ENCODE measurements at regions of chr3 and their contacts with region 1.

Region 1: GRCh38 chr3:10389995-10390394 is 69.1 kb upstream of the SEC13 start:
- DNase-seq: peak; percentile 94
- H3K4me3 ChIP-seq: peak overlapping the region; percentile 41
- H3K27ac ChIP-seq: peak overlapping the region; percentile 97
- H3K4me1 ChIP-seq: peaks cover 96% of the 10 kb centered on the region
- CTCF ChIP-seq: no peak

Region 2: DNA sequence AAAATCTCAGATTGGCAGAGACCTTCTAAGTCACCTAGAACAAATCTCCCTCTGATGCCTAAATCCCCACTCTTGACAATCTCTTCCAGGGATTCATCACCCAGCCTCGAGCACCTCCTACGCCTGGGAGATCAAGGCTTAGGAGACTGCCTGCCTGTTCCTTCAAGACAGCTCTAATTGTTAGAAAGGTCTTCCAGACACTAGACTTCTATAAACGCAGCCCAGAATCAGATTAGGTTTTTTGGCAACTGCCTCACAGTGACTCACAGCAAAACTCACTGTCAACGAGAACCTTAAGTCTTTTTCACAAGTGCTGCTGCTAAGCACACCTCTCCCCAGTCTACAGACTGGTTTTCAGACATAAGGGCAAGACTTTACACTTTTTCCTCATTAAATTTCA is 1163.7 kb before region 1 on chr3:
- CTCF ChIA-PET with region 1: no interaction called
- POLR2A ChIA-PET with region 1: no interaction called
- intact Hi-C with region 1: no loop called
- DNase-seq: no peak
- H3K4me3 ChIP-seq: no peak overlapping the region
- H3K27ac ChIP-seq: no peak overlapping the region
- H3K4me1 ChIP-seq: no peaks in the 10 kb centered on the region
- CTCF ChIP-seq: no peak

Region 3: GRCh38 chr3:10377148-10377725 is 12.8 kb before region 1 on chr3:
- CTCF ChIA-PET with region 1: no interaction called
- POLR2A ChIA-PET with region 1: interaction called, 14 read pairs
- intact Hi-C with region 1: no loop called
- DNase-seq: no peak
- H3K4me3 ChIP-seq: no peak overlapping the region
- H3K27ac ChIP-seq: peak overlapping the region; percentile 74
- H3K4me1 ChIP-seq: peaks cover 79% of the 10 kb centered on the region
- CTCF ChIP-seq: no peak

Measured in OCI-LY7 (cell line).